Caco-2 (cell line): ENCODE measurements at regions of chr5 and their contacts with region 1.

Region 1: GRCh38 chr5:132469380-132470009 is 21.1 kb downstream of the IRF1 start:
- DNase-seq: no peak
- H3K4me3 ChIP-seq: no peak overlapping the region
- H3K4me3 Mint-ChIP-seq: no peak overlapping the region
- H3K27ac Mint-ChIP-seq: peak overlapping the region; percentile 20
- H3K4me1 ChIP-seq: peaks cover 30% of the 10 kb centered on the region
- H3K4me1 Mint-ChIP-seq: peaks cover 17% of the 10 kb centered on the region
- H3K27me3 ChIP-seq: no peaks in the 10 kb centered on the region
- H3K27me3 Mint-ChIP-seq: no peaks in the 10 kb centered on the region
- CTCF ChIP-seq: no peak

Region 2: GRCh38 chr5:132019857-132020555 is 449.5 kb before region 1 on chr5:
- CTCF ChIA-PET with region 1: no interaction called
- POLR2A ChIA-PET with region 1: no interaction called
- intact Hi-C with region 1: no loop called
- DNase-seq: no peak
- H3K4me3 ChIP-seq: no peak overlapping the region
- H3K4me3 Mint-ChIP-seq: no peak overlapping the region
- H3K27ac Mint-ChIP-seq: no peak overlapping the region
- H3K4me1 ChIP-seq: no peaks in the 10 kb centered on the region
- H3K4me1 Mint-ChIP-seq: no peaks in the 10 kb centered on the region
- H3K27me3 ChIP-seq: peaks cover 2% of the 10 kb centered on the region; the same call in 1 of the 2 replicates
- H3K27me3 Mint-ChIP-seq: peaks cover 19% of the 10 kb centered on the region
- CTCF ChIP-seq: no peak

Region 3: DNA sequence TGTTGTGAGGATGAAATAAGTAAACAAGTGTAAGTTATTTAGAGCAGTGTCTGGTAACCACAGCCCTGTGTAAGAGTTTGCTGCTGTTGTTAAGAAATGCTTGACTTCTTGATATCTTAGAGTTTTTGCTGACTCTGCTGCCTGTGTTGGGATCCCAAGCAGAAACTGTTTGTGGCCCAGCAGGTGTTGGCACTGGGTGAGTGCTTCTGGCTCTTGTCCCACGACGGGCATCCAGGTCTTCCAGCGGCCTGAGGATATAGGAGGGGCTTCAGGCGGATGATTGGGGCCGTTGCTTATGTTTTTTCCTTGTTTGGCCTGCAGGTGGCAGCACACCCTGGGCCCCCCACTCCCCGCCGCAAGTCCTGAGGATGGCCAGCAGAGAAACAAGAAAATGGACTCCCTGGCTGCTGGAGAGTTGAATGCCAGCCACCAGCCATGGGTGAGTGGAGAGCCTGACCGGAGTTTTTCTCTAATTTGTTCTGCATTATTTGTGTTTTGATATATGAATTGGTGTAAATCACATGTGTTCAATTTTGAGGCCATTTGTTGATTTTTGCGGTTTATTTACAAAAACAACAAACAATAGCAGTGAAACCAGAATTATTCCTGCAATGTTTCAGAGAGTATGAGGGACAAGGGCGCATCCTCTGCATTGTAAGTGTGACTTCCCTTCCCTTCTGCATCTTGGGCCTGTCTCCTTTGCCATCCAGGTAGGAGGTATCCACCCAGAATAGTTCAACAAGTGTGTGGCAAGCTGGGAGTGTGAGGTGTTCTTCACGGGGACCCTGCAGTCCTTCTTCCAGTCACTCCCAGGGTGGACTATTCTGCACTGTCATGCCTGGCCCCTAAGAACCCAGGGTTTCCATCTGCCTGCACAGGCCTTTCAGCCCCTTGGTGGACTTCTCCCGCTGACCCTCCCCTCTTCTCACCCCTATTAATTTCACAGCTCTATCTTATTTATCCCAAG is 49.7 kb before region 1 on chr5:
- CTCF ChIA-PET with region 1: interaction called, 4 read pairs
- POLR2A ChIA-PET with region 1: no interaction called
- intact Hi-C with region 1: loop called (anchors 1 kb)
- DNase-seq: peak; percentile 80 to 84
- H3K4me3 ChIP-seq: no peak overlapping the region
- H3K4me3 Mint-ChIP-seq: no peak overlapping the region
- H3K27ac Mint-ChIP-seq: peak overlapping the region; percentile 15
- H3K4me1 ChIP-seq: peaks cover 25% of the 10 kb centered on the region
- H3K4me1 Mint-ChIP-seq: peaks cover 17% of the 10 kb centered on the region
- H3K27me3 ChIP-seq: no peaks in the 10 kb centered on the region
- H3K27me3 Mint-ChIP-seq: no peaks in the 10 kb centered on the region
- CTCF ChIP-seq: peak; percentile 76 to 85

Region 4: GRCh38 chr5:132445930-132446329 is 23.6 kb before region 1 on chr5:
- CTCF ChIA-PET with region 1: interaction called, 5 read pairs
- POLR2A ChIA-PET with region 1: no interaction called
- intact Hi-C with region 1: loop called (anchors 2 kb)
- DNase-seq: no peak
- H3K4me3 ChIP-seq: no peak overlapping the region
- H3K4me3 Mint-ChIP-seq: no peak overlapping the region
- H3K27ac Mint-ChIP-seq: peak overlapping the region; percentile 85
- H3K4me1 ChIP-seq: peaks cover 38% of the 10 kb centered on the region
- H3K4me1 Mint-ChIP-seq: peaks cover 24% of the 10 kb centered on the region
- H3K27me3 ChIP-seq: no peaks in the 10 kb centered on the region
- H3K27me3 Mint-ChIP-seq: no peaks in the 10 kb centered on the region
- CTCF ChIP-seq: no peak

Region 5: GRCh38 chr5:132490486-132491367 is 21.2 kb after region 1 on chr5 and contains the start of gene IRF1:
- CTCF ChIA-PET with region 1: interaction called, 12 read pairs
- POLR2A ChIA-PET with region 1: interaction called, 14 read pairs
- intact Hi-C with region 1: no loop called
- DNase-seq: peak; percentile 95 to 97
- H3K4me3 ChIP-seq: peak within 1 kb of the TSS; percentile 89
- H3K4me3 Mint-ChIP-seq: peak within 1 kb of the TSS; percentile 81
- H3K27ac Mint-ChIP-seq: peak within 1 kb of the TSS; percentile 61
- H3K4me1 ChIP-seq: peaks cover 27% of the 10 kb centered on the region
- H3K4me1 Mint-ChIP-seq: peaks cover 7% of the 10 kb centered on the region
- H3K27me3 ChIP-seq: no peaks in the 10 kb centered on the region
- H3K27me3 Mint-ChIP-seq: no peaks in the 10 kb centered on the region
- CTCF ChIP-seq: peak in 1 of 2 experiments; percentile 4
- total RNA-seq, gene IRF1: 16.0 and 16.8 TPM in 2 replicates